ENCODE measurements at regions of chr16 and their contacts with region 1.

Region 1: GRCh38 chr16:51968749-51969148 is 578.2 kb downstream of the TOX3 start:
- DNase-seq: no peak
- ATAC-seq: no peak
- H3K4me3 ChIP-seq: no peak overlapping the region
- H3K27ac ChIP-seq: no peak overlapping the region
- H3K4me1 ChIP-seq: no peaks in the 10 kb centered on the region
- H3K27me3 ChIP-seq: no peaks in the 10 kb centered on the region
- CTCF ChIP-seq: no peak
- POLR2A ChIP-seq: no peak

Region 2: GRCh38 chr16:51579652-51580360 is 388.9 kb before region 1 on chr16:
- intact Hi-C with region 1: no loop called
- DNase-seq: no peak
- ATAC-seq: no peak
- H3K4me3 ChIP-seq: no peak overlapping the region
- H3K27ac ChIP-seq: no peak overlapping the region
- H3K4me1 ChIP-seq: no peaks in the 10 kb centered on the region
- H3K27me3 ChIP-seq: no peaks in the 10 kb centered on the region
- CTCF ChIP-seq: no peak
- POLR2A ChIP-seq: no peak

Region 3: GRCh38 chr16:51839727-51840462 is 128.9 kb before region 1 on chr16:
- intact Hi-C with region 1: loop called in 1 of 2 experiments (anchors 10 kb)
- DNase-seq: no peak
- ATAC-seq: no peak
- H3K4me3 ChIP-seq: no peak overlapping the region
- H3K27ac ChIP-seq: no peak overlapping the region
- H3K4me1 ChIP-seq: no peaks in the 10 kb centered on the region
- H3K27me3 ChIP-seq: no peaks in the 10 kb centered on the region
- CTCF ChIP-seq: no peak
- POLR2A ChIP-seq: no peak

Region 4: GRCh38 chr16:52350031-52350642 is 381.4 kb after region 1 on chr16:
- intact Hi-C with region 1: no loop called
- DNase-seq: no peak
- ATAC-seq: no peak
- H3K4me3 ChIP-seq: no peak overlapping the region
- H3K27ac ChIP-seq: no peak overlapping the region
- H3K4me1 ChIP-seq: peaks cover 0 to 5% (median 0%) of the 10 kb centered on the region in 4 donors
- H3K27me3 ChIP-seq: no peaks in the 10 kb centered on the region
- CTCF ChIP-seq: no peak
- POLR2A ChIP-seq: no peak

Measured in right lobe of liver (tissue), 6 donors.